Caco-2 (cell line): ENCODE measurements at regions of chr1 and their contacts with region 1.

Region 1: DNA sequence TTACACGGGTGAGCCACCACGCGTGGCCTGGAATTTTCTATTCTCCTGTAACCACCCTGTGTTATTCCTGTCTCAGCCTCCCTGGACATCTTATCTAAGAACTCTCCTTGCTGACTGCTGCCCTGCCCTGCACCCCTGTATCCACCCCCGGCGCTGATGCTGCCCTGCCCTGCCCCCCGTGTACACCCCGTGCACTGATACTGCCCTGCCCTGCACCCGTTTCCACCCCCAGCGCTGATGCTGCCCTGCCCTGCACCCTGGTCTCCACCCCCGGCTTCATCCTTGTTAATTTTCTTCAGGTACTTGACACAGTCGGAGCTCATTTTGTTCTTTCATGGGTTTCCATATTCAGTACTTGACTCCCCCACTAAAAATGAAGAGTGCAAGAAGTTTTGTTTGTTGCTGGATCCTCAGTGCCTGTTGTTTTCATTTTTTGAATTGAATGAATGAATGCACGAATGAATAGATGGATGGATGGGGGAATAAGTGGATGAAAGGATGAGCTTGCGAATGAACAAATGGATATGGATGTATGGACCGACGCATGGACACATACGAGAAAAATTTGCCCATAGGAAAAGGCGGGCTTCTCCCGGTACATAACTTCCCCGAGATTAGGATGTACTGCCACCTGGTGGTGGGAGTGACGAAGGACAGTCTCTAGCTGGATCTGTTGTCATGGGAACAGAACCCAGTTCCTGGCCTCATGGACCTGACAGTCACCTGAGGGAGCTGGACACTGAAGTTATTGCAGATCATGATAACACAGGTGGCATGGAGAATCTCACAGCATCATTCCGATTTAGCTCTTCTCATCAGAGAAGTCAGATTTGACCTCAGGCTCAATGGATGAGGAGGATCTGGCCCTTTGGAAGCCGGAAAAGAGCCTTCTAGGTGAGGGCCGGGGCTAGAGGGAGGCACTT is 14.9 kb downstream of the AADACL4 start:
- DNase-seq: peak; percentile 74 to 80
- H3K4me3 ChIP-seq: no peak overlapping the region
- H3K4me3 Mint-ChIP-seq: no peak overlapping the region
- H3K27ac Mint-ChIP-seq: no peak overlapping the region
- H3K4me1 ChIP-seq: peaks cover 15% of the 10 kb centered on the region
- H3K4me1 Mint-ChIP-seq: peaks cover 7% of the 10 kb centered on the region
- H3K27me3 ChIP-seq: no peaks in the 10 kb centered on the region
- H3K27me3 Mint-ChIP-seq: no peaks in the 10 kb centered on the region
- CTCF ChIP-seq: peak; percentile 82 to 88

Region 2: GRCh38 chr1:12272770-12273169 is 386.0 kb before region 1 on chr1:
- CTCF ChIA-PET with region 1: interaction called, 7 read pairs
- POLR2A ChIA-PET with region 1: no interaction called
- intact Hi-C with region 1: loop called (anchors 5 kb)
- DNase-seq: no peak
- H3K4me3 ChIP-seq: no peak overlapping the region
- H3K4me3 Mint-ChIP-seq: no peak overlapping the region
- H3K27ac Mint-ChIP-seq: no peak overlapping the region
- H3K4me1 ChIP-seq: no peaks in the 10 kb centered on the region
- H3K4me1 Mint-ChIP-seq: no peaks in the 10 kb centered on the region
- H3K27me3 ChIP-seq: no peaks in the 10 kb centered on the region
- H3K27me3 Mint-ChIP-seq: no peaks in the 10 kb centered on the region
- CTCF ChIP-seq: no peak

Region 3: DNA sequence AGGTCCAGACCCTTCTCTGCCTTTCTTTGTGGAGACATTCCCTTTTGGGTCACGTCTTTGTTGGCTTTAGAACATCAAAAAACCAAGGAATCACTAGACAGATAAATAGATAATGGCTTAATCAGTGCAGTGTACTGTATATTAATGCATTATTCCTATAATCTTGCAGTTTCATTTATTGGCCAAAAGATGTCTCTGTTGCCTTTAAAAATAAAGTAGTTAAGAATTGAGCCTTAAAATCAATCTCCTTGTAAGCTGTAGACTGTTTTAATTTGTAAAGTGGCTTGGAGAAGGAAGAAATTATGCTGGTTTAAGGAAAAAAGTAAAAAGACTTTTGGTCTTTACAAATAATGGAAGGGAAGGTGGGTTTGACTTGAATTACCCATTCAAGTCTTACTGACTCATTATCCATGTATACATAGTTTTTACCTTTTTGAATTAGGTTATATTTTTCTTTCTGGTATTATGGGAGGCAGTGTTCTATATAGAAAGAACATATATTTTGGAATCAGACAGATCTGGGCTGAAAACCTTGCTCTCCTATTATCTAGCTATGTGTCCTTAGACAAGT is 344.4 kb before region 1 on chr1:
- CTCF ChIA-PET with region 1: interaction called, 4 read pairs
- POLR2A ChIA-PET with region 1: no interaction called
- intact Hi-C with region 1: loop called (anchors 1 kb)
- DNase-seq: no peak
- H3K4me3 ChIP-seq: no peak overlapping the region
- H3K4me3 Mint-ChIP-seq: no peak overlapping the region
- H3K27ac Mint-ChIP-seq: no peak overlapping the region
- H3K4me1 ChIP-seq: 0 out of 2 replicates have a peak, but pooled peaks cover 7% of the 10 kb centered on the region
- H3K4me1 Mint-ChIP-seq: no peaks in the 10 kb centered on the region
- H3K27me3 ChIP-seq: no peaks in the 10 kb centered on the region
- H3K27me3 Mint-ChIP-seq: no peaks in the 10 kb centered on the region
- CTCF ChIP-seq: peak; percentile 15 to 50